ENCODE measurements at regions of chr13 and their contacts with region 1.

Region 1: GRCh38 chr13:98411681-98412201 is 165.2 kb downstream of the STK24 start:
- DNase-seq: peak in 6 of 9 donors; percentile 16 to 35 (median 28)
- ATAC-seq: peak; percentile 48
- H3K4me3 ChIP-seq: peak overlapping the region; percentile 49
- H3K4me3 Mint-ChIP-seq: peak overlapping the region; percentile 62 to 92 (median 82)
- H3K27ac ChIP-seq: no peak overlapping the region
- H3K27ac Mint-ChIP-seq: peak overlapping the region in 8 of 9 donors; percentile 1 to 70 (median 28)
- H3K4me1 ChIP-seq: peaks cover 0 to 9% of the 10 kb centered on the region in 2 donors
- H3K4me1 Mint-ChIP-seq: peaks cover 7 to 32% (median 22%) of the 10 kb centered on the region in 7 donors
- H3K27me3 ChIP-seq: peaks cover 0 to 5% of the 10 kb centered on the region in 2 donors
- H3K27me3 Mint-ChIP-seq: peaks cover 0 to 10% (median under 1%) of the 10 kb centered on the region in 5 donors

Region 2: GRCh38 chr13:97855570-97856303 is 556.0 kb before region 1 on chr13:
- CTCF ChIA-PET with region 1: no interaction called
- POLR2A ChIA-PET with region 1: no interaction called
- intact Hi-C with region 1: loop called in 1 of 2 experiments (anchors 10 kb)
- DNase-seq: peak in 4 of 9 donors; percentile 6 to 22 (median 16)
- ATAC-seq: peak; percentile 45
- H3K4me3 ChIP-seq: no peak overlapping the region
- H3K4me3 Mint-ChIP-seq: no peak overlapping the region
- H3K27ac ChIP-seq: no peak overlapping the region
- H3K27ac Mint-ChIP-seq: no peak overlapping the region
- H3K4me1 ChIP-seq: no peaks in the 10 kb centered on the region
- H3K4me1 Mint-ChIP-seq: peaks cover 0 to 1% (median 0%) of the 10 kb centered on the region in 7 donors
- H3K27me3 ChIP-seq: no peaks in the 10 kb centered on the region
- H3K27me3 Mint-ChIP-seq: peaks cover 5 to 35% (median 21%) of the 10 kb centered on the region in 5 donors